T-cell (primary cell): ENCODE measurements at regions of chr4 and their contacts with region 1.

Region 1: GRCh38 chr4:142383800-142384635 is 462.1 kb downstream of the INPP4B start:
- DNase-seq: no peak
- ATAC-seq: no peak
- H3K4me3 ChIP-seq: no peak overlapping the region
- H3K4me3 Mint-ChIP-seq: peak overlapping the region in 1 of 3 donors; percentile 29
- H3K27ac ChIP-seq: peak overlapping the region; percentile 4
- H3K27ac Mint-ChIP-seq: peak overlapping the region; percentile 79 to 88
- H3K4me1 ChIP-seq: peaks cover 3 to 8% of the 10 kb centered on the region in 2 experiments
- H3K4me1 Mint-ChIP-seq: peaks cover 69 to 82% (median 74%) of the 10 kb centered on the region in 3 donors
- H3K27me3 ChIP-seq: no peaks in the 10 kb centered on the region
- H3K27me3 Mint-ChIP-seq: no peaks in the 10 kb centered on the region

Region 2: DNA sequence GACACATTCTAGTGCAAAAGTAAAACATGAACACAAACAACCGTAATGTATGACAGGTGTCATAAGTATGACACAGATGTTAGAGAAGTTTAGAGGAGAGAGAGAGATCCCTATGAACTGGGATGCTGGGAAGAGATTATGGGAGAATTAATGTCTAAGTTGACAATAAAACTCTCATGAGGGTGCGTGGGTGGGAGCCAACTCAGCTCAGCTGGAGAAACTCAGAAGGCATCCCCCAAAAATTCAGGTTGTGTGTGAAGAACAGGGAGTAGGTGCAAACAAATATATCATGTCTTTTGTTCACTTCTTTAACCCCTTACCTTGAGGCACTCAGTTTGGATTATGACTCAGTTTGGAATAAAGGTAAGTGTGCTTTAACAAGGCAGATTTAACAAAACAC is 22.0 kb before region 1 on chr4:
- CTCF ChIA-PET with region 1: interaction called, 3 to 4 read pairs
- POLR2A ChIA-PET with region 1: interaction called, 6 to 10 read pairs
- DNase-seq: no peak
- ATAC-seq: no peak
- H3K4me3 ChIP-seq: no peak overlapping the region
- H3K4me3 Mint-ChIP-seq: no peak overlapping the region
- H3K27ac ChIP-seq: no peak overlapping the region
- H3K27ac Mint-ChIP-seq: peak overlapping the region; percentile 19 to 82
- H3K4me1 ChIP-seq: peaks cover under 1 to 10% of the 10 kb centered on the region in 2 experiments
- H3K4me1 Mint-ChIP-seq: peaks cover 79 to 85% (median 82%) of the 10 kb centered on the region in 3 donors
- H3K27me3 ChIP-seq: no peaks in the 10 kb centered on the region
- H3K27me3 Mint-ChIP-seq: no peaks in the 10 kb centered on the region

Region 3: GRCh38 chr4:142405021-142405694 is 21.1 kb after region 1 on chr4:
- CTCF ChIA-PET with region 1: interaction called, 5 to 10 read pairs
- POLR2A ChIA-PET with region 1: interaction called, 5 to 6 read pairs
- DNase-seq: peak; percentile 5 to 75 (median 34)
- ATAC-seq: peak; percentile 39 to 66 (median 57)
- H3K4me3 ChIP-seq: peak overlapping the region; percentile 56 to 81
- H3K4me3 Mint-ChIP-seq: peak overlapping the region; percentile 84 to 94 (median 94)
- H3K27ac ChIP-seq: peak overlapping the region; percentile 83
- H3K27ac Mint-ChIP-seq: peak overlapping the region; percentile 98 to 99
- H3K4me1 ChIP-seq: peaks cover 34 to 41% of the 10 kb centered on the region in 2 experiments
- H3K4me1 Mint-ChIP-seq: peaks cover 64 to 74% (median 68%) of the 10 kb centered on the region in 3 donors
- H3K27me3 ChIP-seq: no peaks in the 10 kb centered on the region
- H3K27me3 Mint-ChIP-seq: no peaks in the 10 kb centered on the region